SK-N-SH (cell line): ENCODE measurements at regions of chr5 and their contacts with region 1.

Region 1: GRCh38 chr5:168947212-168947868 is 353.6 kb downstream of the SLIT3 start:
- DNase-seq: peak; percentile 78
- H3K4me3 ChIP-seq: peak overlapping the region in 1 of 2 experiments; percentile 44; a peak in 1 of 4 replicates
- H3K27ac ChIP-seq: peak overlapping the region in 1 of 2 experiments; percentile 98; a peak in 2 of 4 replicates
- H3K4me1 ChIP-seq: peaks cover 0 to 69% of the 10 kb centered on the region in 2 experiments; a peak in 2 of 4 replicates
- H3K27me3 ChIP-seq: no peaks in the 10 kb centered on the region
- CTCF ChIP-seq: peak; percentile 87
- EP300 ChIP-seq: 0 out of 4 replicates have a peak, but pooled peaks of 1 of the 2 experiments have one; percentile 32
- RAD21 ChIP-seq: peak; percentile 88

Region 2: GRCh38 chr5:168679515-168679920 is 267.8 kb before region 1 on chr5:
- CTCF ChIA-PET with region 1: interaction called, 14 read pairs
- POLR2A ChIA-PET with region 1: no interaction called
- DNase-seq: peak; percentile 82
- H3K4me3 ChIP-seq: no peak overlapping the region
- H3K27ac ChIP-seq: peak overlapping the region in 1 of 2 experiments; percentile 44; a peak in 2 of 4 replicates
- H3K4me1 ChIP-seq: peaks cover 0 to 18% of the 10 kb centered on the region in 2 experiments; a peak in 1 of 4 replicates
- H3K27me3 ChIP-seq: no peaks in the 10 kb centered on the region
- CTCF ChIP-seq: peak; percentile 92
- EP300 ChIP-seq: no peak
- RAD21 ChIP-seq: peak; percentile 78

Region 3: DNA sequence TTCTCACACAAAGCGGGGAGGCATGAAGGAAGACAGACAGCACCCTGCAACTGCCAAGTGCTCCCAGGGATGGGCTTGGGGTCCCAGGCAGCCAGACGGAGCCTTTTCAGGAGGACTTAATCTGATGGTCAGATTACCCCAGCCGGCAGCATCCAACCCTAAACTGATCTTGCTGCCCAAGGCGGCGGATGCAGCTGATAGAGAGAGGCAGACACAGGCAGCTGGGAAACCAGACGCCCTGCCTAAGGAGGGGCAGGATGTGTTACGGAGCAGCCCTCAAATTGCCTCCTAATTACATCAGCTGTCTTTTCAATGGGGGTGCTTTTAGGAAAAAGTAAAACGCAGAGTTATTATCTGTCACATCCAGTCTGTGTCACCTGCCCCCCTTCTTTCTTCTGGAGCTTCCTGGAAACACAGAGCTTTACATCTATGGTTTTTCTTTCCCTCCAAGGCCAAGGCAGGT is 177.3 kb before region 1 on chr5:
- CTCF ChIA-PET with region 1: interaction called, 18 read pairs
- POLR2A ChIA-PET with region 1: interaction called, 7 read pairs
- DNase-seq: peak; percentile 87
- H3K4me3 ChIP-seq: no peak overlapping the region
- H3K27ac ChIP-seq: peak overlapping the region in 1 of 2 experiments; percentile 100; a peak in 2 of 4 replicates
- H3K4me1 ChIP-seq: peaks cover 15 to 89% of the 10 kb centered on the region in 2 experiments; a peak in 3 of 4 replicates
- H3K27me3 ChIP-seq: no peaks in the 10 kb centered on the region
- CTCF ChIP-seq: no peak
- EP300 ChIP-seq: peak; percentile 49 to 100; a peak in 3 of 4 replicates
- RAD21 ChIP-seq: 0 out of 2 replicates have a peak, but pooled peaks have one; percentile 18

Region 4: GRCh38 chr5:168890816-168891812 is 56.2 kb before region 1 on chr5:
- CTCF ChIA-PET with region 1: interaction called, 29 read pairs
- POLR2A ChIA-PET with region 1: interaction called, 99 read pairs
- DNase-seq: no peak
- H3K4me3 ChIP-seq: no peak overlapping the region
- H3K27ac ChIP-seq: peak overlapping the region in 1 of 2 experiments; percentile 100; a peak in 2 of 4 replicates
- H3K4me1 ChIP-seq: peaks cover 6 to 78% of the 10 kb centered on the region in 2 experiments
- H3K27me3 ChIP-seq: no peaks in the 10 kb centered on the region
- CTCF ChIP-seq: no peak
- EP300 ChIP-seq: no peak
- RAD21 ChIP-seq: peak; percentile 50

Region 5: DNA sequence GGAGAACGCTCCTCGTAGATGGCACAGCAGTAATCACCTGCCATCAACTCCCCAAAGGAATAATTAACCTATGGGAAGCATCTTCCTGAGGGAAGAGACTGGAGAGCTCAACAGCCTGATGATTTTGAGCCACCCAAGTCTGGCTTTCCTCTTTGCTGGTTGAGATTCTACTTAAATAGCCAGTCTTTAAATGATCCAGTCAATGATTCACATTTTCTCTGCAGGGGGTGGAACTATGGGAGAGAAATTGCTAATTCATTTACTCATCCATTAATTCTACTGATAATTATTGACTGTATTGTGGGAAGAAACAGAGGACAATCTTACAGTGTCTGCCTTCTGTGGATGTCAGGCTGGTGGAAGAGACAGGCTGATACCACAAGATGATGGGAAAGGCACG is 13.2 kb before region 1 on chr5:
- CTCF ChIA-PET with region 1: no interaction called
- POLR2A ChIA-PET with region 1: no interaction called
- DNase-seq: no peak
- H3K4me3 ChIP-seq: no peak overlapping the region
- H3K27ac ChIP-seq: no peak overlapping the region
- H3K4me1 ChIP-seq: peaks cover 0 to 5% of the 10 kb centered on the region in 2 experiments; a peak in 1 of 4 replicates
- H3K27me3 ChIP-seq: no peaks in the 10 kb centered on the region
- CTCF ChIP-seq: no peak
- EP300 ChIP-seq: no peak
- RAD21 ChIP-seq: no peak

Region 6: DNA sequence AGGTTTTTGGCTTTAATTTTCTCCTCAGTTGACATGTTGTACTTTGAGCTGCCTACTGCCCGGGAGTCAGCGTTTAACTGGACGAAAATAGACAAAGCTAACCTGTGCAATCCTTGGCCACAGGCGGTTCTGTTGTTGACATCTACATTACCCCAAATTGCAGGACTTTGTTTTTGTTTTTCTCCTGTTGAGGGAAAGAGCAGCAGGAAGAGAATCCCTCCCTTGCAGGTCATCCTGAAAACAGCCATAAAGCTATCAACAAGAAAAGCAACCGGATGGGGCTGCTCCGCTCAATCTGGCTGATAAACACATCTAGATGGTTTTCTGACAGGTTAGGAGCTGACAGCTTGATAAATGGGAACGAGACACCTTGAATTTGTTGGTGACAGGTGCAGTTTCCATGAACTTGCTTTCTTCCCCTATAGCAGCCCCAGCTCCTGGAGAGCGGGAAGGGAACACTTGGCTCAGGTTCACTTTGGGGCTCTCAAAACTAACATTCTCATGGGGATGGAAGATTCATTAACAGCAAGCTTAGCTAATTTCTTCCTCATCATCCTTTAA is 22.1 kb after region 1 on chr5:
- CTCF ChIA-PET with region 1: interaction called, 12 read pairs
- POLR2A ChIA-PET with region 1: no interaction called
- DNase-seq: no peak
- H3K4me3 ChIP-seq: no peak overlapping the region
- H3K27ac ChIP-seq: no peak overlapping the region
- H3K4me1 ChIP-seq: peaks cover 0 to 9% of the 10 kb centered on the region in 2 experiments; a peak in 2 of 4 replicates
- H3K27me3 ChIP-seq: no peaks in the 10 kb centered on the region
- CTCF ChIP-seq: no peak
- EP300 ChIP-seq: no peak
- RAD21 ChIP-seq: no peak

Region 7: GRCh38 chr5:169029661-169030274 is 82.4 kb after region 1 on chr5:
- CTCF ChIA-PET with region 1: no interaction called
- POLR2A ChIA-PET with region 1: no interaction called
- DNase-seq: no peak
- H3K4me3 ChIP-seq: no peak overlapping the region
- H3K27ac ChIP-seq: no peak overlapping the region
- H3K4me1 ChIP-seq: peaks cover 0 to 5% of the 10 kb centered on the region in 2 experiments; a peak in 1 of 4 replicates
- H3K27me3 ChIP-seq: no peaks in the 10 kb centered on the region
- CTCF ChIP-seq: no peak
- EP300 ChIP-seq: no peak
- RAD21 ChIP-seq: no peak

Region 8: GRCh38 chr5:169149317-169149716 is 202.0 kb after region 1 on chr5:
- CTCF ChIA-PET with region 1: interaction called, 10 read pairs
- POLR2A ChIA-PET with region 1: no interaction called
- DNase-seq: peak; percentile 51
- H3K4me3 ChIP-seq: no peak overlapping the region; a peak in 1 of 4 replicates
- H3K27ac ChIP-seq: peak overlapping the region in 1 of 2 experiments; percentile 97; a peak in 3 of 4 replicates
- H3K4me1 ChIP-seq: peaks cover 0 to 76% of the 10 kb centered on the region in 2 experiments; a peak in 2 of 4 replicates
- H3K27me3 ChIP-seq: no peaks in the 10 kb centered on the region
- CTCF ChIP-seq: peak; percentile 57
- EP300 ChIP-seq: peak in 1 of 2 experiments; percentile 58; a peak in 1 of 4 replicates
- RAD21 ChIP-seq: peak; percentile 69